Activated T-helper 1 cell treated with anti-CD3 and anti-CD28 coated beads, Interleukin-12 subunit alpha, Interleukin-12 subunit beta, Interleukin-2, Interleukin-4 antibody, amounts not matched to agents 30 ng/mL and 10 ng/mL and 1 ng/mL, durations not matched to agents 14 hours and 24 hours and 36 hours (primary cell): ENCODE measurements at regions of chr5 and their contacts with region 1.

Region 1: DNA sequence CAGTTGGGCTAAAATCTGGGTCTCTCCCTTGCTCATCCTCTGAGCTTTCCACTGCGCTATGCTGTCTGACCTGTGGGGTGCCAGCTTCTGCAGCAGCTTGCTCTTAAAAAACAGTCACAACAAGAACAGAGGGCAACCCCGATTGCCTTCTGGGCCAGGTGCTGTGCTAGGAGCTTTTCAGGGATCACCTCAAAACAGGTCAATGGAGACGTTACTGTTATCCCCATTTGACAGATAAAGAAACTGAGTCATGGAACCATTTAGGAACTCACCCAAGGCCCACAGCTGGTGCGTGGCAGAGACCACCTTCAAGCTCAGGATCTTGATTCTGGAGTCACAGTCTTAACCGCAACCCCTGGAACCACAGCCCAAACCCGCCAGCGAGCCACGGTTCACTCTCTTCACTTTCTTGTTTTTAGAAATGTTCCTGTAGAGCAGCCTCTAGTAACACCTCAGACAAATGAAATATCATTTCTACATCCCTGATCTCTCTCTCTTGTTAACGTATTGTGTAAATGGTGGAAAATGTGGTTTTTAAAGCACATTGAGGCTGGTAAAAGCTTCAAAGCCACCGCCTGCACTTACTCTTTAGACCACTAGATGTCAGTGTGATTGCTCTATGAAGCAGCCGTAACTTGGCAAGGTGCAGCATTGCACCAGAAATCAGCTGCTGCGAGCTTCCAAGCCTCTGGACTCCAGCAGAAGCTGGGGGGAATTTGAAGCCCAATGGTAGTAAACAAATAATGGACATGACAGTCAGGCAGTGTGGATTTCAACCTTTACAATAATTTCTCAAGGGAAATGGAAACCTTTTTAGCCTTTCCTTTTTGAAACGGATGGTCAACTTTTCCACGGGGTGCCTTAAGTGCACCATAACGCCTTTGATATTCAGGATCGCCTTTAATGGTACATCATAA is 1.7 kb downstream of the FYB1 start:
- DNase-seq: peak; percentile 70
- H3K4me3 Mint-ChIP-seq: peak overlapping the region; percentile 74
- H3K27ac Mint-ChIP-seq: peak overlapping the region; percentile 78
- H3K4me1 Mint-ChIP-seq: peaks cover 59% of the 10 kb centered on the region
- H3K27me3 Mint-ChIP-seq: no peaks in the 10 kb centered on the region

Region 2: GRCh38 chr5:38551030-38552017 is 666.3 kb before region 1 on chr5:
- intact Hi-C with region 1: no loop called
- DNase-seq: no peak
- H3K4me3 Mint-ChIP-seq: no peak overlapping the region
- H3K27ac Mint-ChIP-seq: no peak overlapping the region
- H3K4me1 Mint-ChIP-seq: peaks cover 5% of the 10 kb centered on the region
- H3K27me3 Mint-ChIP-seq: peaks cover 46% of the 10 kb centered on the region

Region 3: DNA sequence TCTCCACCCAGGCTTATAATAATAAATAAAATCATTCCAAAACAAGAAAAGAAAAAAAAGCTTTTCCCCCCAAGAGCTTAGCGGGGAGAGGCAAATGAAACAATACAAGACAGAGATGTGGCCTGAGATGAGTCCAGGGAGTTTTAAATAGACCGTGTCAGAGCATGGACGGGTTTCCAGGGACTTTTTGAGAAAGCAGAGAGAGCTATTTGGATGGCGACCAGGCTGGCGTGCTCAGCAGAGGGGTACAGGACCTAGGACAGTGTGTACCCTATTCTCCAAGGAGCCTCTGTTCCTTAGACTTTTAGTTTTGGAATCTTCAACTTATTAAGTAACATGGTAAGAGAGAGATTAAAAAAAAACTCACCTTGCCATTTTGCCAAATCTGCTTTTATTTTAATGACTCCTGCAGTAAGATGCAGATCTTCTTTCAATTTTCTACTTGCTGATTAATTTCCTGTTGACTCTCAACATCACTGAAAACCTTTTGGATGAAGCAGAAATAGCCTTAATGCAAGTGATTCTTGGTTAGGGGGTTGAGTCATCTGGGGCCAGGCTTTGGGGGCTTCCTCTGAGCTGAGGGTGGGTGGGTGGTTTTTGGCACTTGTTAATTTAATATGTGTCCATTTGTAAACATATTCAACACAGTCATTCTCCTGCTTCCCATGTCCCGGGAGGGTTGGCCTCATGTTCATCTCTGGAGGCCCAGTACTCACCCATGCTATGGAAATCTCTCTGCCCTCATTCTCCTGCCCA is 421.5 kb before region 1 on chr5:
- intact Hi-C with region 1: no loop called
- DNase-seq: no peak
- H3K4me3 Mint-ChIP-seq: no peak overlapping the region
- H3K27ac Mint-ChIP-seq: no peak overlapping the region
- H3K4me1 Mint-ChIP-seq: no peaks in the 10 kb centered on the region
- H3K27me3 Mint-ChIP-seq: peaks cover 2% of the 10 kb centered on the region

Region 4: GRCh38 chr5:39148983-39149534 is 68.6 kb before region 1 on chr5:
- intact Hi-C with region 1: loop called (anchors 1 kb)
- DNase-seq: no peak
- H3K4me3 Mint-ChIP-seq: no peak overlapping the region
- H3K27ac Mint-ChIP-seq: peak overlapping the region; percentile 76
- H3K4me1 Mint-ChIP-seq: peaks cover 52% of the 10 kb centered on the region
- H3K27me3 Mint-ChIP-seq: no peaks in the 10 kb centered on the region

Region 5: DNA sequence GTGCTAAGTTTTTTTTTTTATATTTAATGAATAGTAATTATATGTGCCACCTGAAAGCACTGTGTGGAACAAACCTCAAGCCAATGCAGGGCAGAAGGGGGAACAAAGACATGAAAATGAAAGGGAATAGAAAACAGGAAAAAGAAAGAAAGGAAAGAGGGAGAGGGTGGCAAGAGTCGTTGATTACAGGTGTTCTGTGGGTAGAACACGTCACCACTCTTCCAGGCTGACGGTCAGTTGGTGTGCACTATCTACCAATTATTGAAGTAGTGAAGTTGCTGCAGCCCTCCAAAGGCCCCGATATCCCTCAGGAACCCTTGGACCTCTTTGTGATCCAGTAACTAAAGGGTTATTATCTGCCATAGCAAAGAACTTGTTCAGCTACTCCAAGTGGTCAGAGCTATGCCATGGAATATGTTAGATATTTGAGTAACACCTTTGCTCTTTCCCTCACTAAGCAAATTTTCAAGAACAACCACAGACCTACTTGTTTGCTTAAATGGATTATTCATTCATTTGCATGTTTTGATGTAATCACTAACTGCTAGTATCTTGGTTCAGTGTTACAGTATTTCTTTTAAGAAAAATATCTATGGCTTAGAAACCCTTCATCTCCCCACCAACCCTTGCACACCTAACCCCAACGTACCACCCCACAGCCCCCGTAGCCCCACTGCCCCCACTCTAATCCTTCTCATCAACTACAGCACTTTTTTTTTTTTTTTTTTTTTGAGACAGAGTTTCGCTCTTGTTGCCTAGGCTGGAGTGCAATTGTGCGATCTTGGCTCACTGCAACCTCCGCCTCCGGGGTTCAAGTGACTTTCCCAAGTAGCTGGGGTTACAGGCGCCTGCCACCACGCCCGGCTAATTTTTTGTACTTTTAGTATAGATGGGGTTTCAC is 29.5 kb before region 1 on chr5:
- intact Hi-C with region 1: loop called (anchors 1 kb)
- DNase-seq: no peak
- H3K4me3 Mint-ChIP-seq: peak overlapping the region; percentile 70
- H3K27ac Mint-ChIP-seq: peak overlapping the region; percentile 97
- H3K4me1 Mint-ChIP-seq: peaks cover 95% of the 10 kb centered on the region
- H3K27me3 Mint-ChIP-seq: no peaks in the 10 kb centered on the region

Region 6: DNA sequence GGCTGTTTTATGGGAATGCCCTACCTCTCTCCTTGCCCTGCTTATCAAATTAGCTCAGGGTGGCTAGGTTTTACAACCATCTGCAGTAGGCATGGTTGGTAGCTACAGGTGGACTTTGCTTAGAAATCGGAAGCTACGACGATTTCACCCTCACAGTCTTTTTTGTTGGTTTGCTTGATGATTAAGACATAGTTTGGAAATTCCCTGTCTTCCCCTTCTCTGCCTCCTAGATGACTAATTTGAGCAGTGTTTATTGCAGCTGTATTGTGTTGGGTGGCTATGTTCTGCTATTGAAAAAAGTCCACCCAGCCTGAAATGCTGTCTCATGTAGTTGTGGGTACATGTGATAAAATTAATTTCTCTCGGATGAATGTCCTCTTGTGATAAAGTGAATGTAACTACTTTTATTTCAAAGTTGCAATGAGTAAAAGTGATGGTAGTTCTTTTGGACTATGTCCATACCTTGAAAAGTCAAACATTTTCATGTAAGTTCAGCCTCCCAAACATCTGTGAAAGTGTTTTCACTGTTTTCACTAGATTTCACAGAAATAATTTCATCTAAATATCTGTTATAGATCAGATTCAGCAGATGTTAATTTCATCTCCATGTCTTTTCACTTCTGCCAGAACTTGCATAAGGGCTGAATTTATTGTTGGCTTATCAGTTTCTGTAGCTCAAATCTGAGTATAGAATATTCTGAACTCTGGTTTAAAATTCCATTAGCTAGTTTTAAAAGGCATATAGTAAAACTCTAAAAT is 39.0 kb after region 1 on chr5:
- intact Hi-C with region 1: loop called (anchors 1 kb)
- DNase-seq: peak; percentile 24
- H3K4me3 Mint-ChIP-seq: no peak overlapping the region
- H3K27ac Mint-ChIP-seq: no peak overlapping the region
- H3K4me1 Mint-ChIP-seq: peaks cover 17% of the 10 kb centered on the region
- H3K27me3 Mint-ChIP-seq: peaks cover 2% of the 10 kb centered on the region

Region 7: GRCh38 chr5:39376293-39376714 is 158.7 kb after region 1 on chr5:
- intact Hi-C with region 1: loop called (anchors 1 kb)
- DNase-seq: peak; percentile 17
- H3K4me3 Mint-ChIP-seq: no peak overlapping the region
- H3K27ac Mint-ChIP-seq: no peak overlapping the region
- H3K4me1 Mint-ChIP-seq: no peaks in the 10 kb centered on the region
- H3K27me3 Mint-ChIP-seq: peaks cover 9% of the 10 kb centered on the region

Region 8: DNA sequence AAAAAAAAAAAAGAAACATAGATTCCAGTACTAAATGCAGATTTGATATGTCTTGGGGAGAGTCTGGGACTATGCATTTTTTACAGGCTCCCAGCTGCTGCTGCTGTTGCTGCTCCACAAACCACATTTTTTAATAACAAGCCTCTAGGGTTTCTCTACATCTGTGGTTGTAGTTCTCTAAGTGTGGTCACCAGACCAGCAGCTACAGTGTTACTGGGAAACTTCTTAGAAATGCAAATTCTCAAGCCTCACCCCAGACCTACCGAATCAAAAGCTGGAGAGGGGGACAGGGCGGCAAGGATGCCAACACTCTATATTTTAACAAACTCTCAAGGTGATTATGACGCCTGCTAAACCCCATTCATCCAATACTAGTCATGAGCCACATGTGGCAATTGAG is 1168.7 kb after region 1 on chr5:
- intact Hi-C with region 1: loop called (anchors 10 kb)
- DNase-seq: peak; percentile 19
- H3K4me3 Mint-ChIP-seq: no peak overlapping the region
- H3K27ac Mint-ChIP-seq: peak overlapping the region; percentile 19
- H3K4me1 Mint-ChIP-seq: peaks cover 88% of the 10 kb centered on the region
- H3K27me3 Mint-ChIP-seq: no peaks in the 10 kb centered on the region

Region 9: GRCh38 chr5:40834849-40835787 is 1617.5 kb after region 1 on chr5 and contains the start of gene RPL37:
- intact Hi-C with region 1: no loop called
- DNase-seq: peak; percentile 89
- H3K4me3 Mint-ChIP-seq: peak within 1 kb of the TSS; percentile 95
- H3K27ac Mint-ChIP-seq: peak within 1 kb of the TSS; percentile 90
- H3K4me1 Mint-ChIP-seq: peaks cover 45% of the 10 kb centered on the region
- H3K27me3 Mint-ChIP-seq: no peaks in the 10 kb centered on the region
- total RNA-seq, gene RPL37: 1,451 and 1,473 TPM in 2 replicates